CD8-positive, alpha-beta T cell (primary cell): ENCODE measurements at regions of chr2 and their contacts with region 1.

Region 1: GRCh38 chr2:37832590-37833197 is 92.4 kb upstream of the RMDN2 start:
- DNase-seq: peak; percentile 62 to 91 (median 84)
- ATAC-seq: peak; percentile 78
- H3K4me3 ChIP-seq: no peak overlapping the region
- H3K4me3 Mint-ChIP-seq: no peak overlapping the region
- H3K27ac ChIP-seq: no peak overlapping the region
- H3K27ac Mint-ChIP-seq: no peak overlapping the region
- H3K4me1 ChIP-seq: no peaks in the 10 kb centered on the region
- H3K4me1 Mint-ChIP-seq: peaks cover 5% of the 10 kb centered on the region
- H3K27me3 ChIP-seq: no peaks in the 10 kb centered on the region
- H3K27me3 Mint-ChIP-seq: no peaks in the 10 kb centered on the region
- CTCF ChIP-seq: peak; percentile 90

Region 2: DNA sequence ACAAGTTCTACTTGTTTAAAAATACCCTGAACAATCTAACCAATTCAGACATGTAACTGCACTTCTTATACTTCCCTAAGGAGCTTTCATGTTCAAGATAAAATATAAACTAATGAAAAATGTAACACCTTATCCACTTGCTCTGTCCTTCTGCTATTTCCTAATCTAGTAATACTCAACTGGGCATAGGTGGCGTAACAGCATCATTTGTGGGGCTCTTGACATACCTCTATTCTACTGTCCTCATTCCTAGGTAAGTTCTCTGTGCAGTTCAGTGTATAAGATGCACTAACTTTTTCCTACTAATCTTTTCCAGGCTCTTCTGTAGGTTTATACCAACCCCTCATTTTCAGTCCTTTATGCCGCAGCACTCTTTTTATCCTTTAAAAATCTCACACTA is 544.7 kb before region 1 on chr2:
- CTCF ChIA-PET with region 1: no interaction called
- POLR2A ChIA-PET with region 1: no interaction called
- intact Hi-C with region 1: loop called in 1 of 2 experiments (anchors 5 kb)
- DNase-seq: peak in 2 of 9 experiments; percentile 28 to 34
- ATAC-seq: no peak
- H3K4me3 ChIP-seq: no peak overlapping the region
- H3K4me3 Mint-ChIP-seq: no peak overlapping the region
- H3K27ac ChIP-seq: no peak overlapping the region
- H3K27ac Mint-ChIP-seq: no peak overlapping the region
- H3K4me1 ChIP-seq: no peaks in the 10 kb centered on the region
- H3K4me1 Mint-ChIP-seq: no peaks in the 10 kb centered on the region
- H3K27me3 ChIP-seq: no peaks in the 10 kb centered on the region
- H3K27me3 Mint-ChIP-seq: no peaks in the 10 kb centered on the region
- CTCF ChIP-seq: no peak

Region 3: GRCh38 chr2:37421686-37422085 is 411.0 kb before region 1 on chr2:
- CTCF ChIA-PET with region 1: interaction called, 361 read pairs
- POLR2A ChIA-PET with region 1: no interaction called
- intact Hi-C with region 1: no loop called
- DNase-seq: no peak
- ATAC-seq: no peak
- H3K4me3 ChIP-seq: no peak overlapping the region
- H3K4me3 Mint-ChIP-seq: no peak overlapping the region
- H3K27ac ChIP-seq: no peak overlapping the region
- H3K27ac Mint-ChIP-seq: no peak overlapping the region
- H3K4me1 ChIP-seq: no peaks in the 10 kb centered on the region
- H3K4me1 Mint-ChIP-seq: no peaks in the 10 kb centered on the region
- H3K27me3 ChIP-seq: no peaks in the 10 kb centered on the region
- H3K27me3 Mint-ChIP-seq: no peaks in the 10 kb centered on the region
- CTCF ChIP-seq: no peak

Region 4: DNA sequence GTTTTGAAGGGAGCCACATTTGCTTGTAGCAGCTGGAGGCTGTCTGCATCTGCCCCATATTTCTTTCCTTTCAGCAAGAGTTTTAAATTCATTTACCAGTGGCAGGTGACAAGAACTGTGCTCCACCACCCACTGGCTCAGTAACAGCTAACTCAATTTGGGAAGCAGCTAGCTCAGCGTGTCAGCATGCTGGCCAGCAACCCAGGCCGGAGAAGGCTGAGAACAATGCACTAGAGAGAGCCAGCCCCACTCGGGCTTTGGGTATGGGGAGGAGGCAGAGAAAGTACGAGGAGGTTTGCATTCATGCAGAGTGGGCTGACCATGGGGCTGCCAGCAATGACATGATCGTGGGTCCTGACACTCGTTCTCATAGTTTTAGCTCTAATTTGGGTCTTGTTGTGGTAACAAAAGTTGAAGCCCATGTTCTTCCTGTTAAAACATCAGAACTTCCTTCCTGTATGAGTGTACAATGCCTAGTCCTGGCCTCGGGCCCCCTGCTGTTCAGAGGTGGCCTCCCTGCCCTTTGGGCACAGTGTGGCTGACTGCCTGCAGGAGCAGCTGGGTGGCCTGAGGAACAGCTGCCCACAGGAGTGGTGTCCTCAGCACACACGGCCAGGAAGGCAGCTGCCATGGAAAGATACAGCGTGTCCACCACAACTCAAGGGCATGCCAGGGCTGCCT is 184.2 kb before region 1 on chr2:
- CTCF ChIA-PET with region 1: interaction called, 12 read pairs
- POLR2A ChIA-PET with region 1: interaction called, 3 read pairs
- intact Hi-C with region 1: no loop called
- DNase-seq: peak in 8 of 9 experiments; percentile 8 to 80 (median 57)
- ATAC-seq: peak; percentile 71
- H3K4me3 ChIP-seq: peak overlapping the region in 1 of 2 experiments; percentile 24
- H3K4me3 Mint-ChIP-seq: peak overlapping the region; percentile 65
- H3K27ac ChIP-seq: peak overlapping the region in 1 of 2 experiments; percentile 68
- H3K27ac Mint-ChIP-seq: peak overlapping the region; percentile 92
- H3K4me1 ChIP-seq: peaks cover 84% of the 10 kb centered on the region
- H3K4me1 Mint-ChIP-seq: peaks cover 92% of the 10 kb centered on the region
- H3K27me3 ChIP-seq: no peaks in the 10 kb centered on the region
- H3K27me3 Mint-ChIP-seq: no peaks in the 10 kb centered on the region
- CTCF ChIP-seq: peak; percentile 24

Region 5: GRCh38 chr2:37897506-37897905 is 64.8 kb after region 1 on chr2:
- CTCF ChIA-PET with region 1: no interaction called
- POLR2A ChIA-PET with region 1: no interaction called
- intact Hi-C with region 1: no loop called
- DNase-seq: no peak
- ATAC-seq: no peak
- H3K4me3 ChIP-seq: no peak overlapping the region
- H3K4me3 Mint-ChIP-seq: no peak overlapping the region
- H3K27ac ChIP-seq: no peak overlapping the region
- H3K27ac Mint-ChIP-seq: no peak overlapping the region
- H3K4me1 ChIP-seq: peaks cover 11% of the 10 kb centered on the region
- H3K4me1 Mint-ChIP-seq: peaks cover 13% of the 10 kb centered on the region
- H3K27me3 ChIP-seq: no peaks in the 10 kb centered on the region
- H3K27me3 Mint-ChIP-seq: no peaks in the 10 kb centered on the region
- CTCF ChIP-seq: no peak